Left lung (tissue), 14 donors: ENCODE measurements at regions of chr12 and their contacts with region 1.

Region 1: DNA sequence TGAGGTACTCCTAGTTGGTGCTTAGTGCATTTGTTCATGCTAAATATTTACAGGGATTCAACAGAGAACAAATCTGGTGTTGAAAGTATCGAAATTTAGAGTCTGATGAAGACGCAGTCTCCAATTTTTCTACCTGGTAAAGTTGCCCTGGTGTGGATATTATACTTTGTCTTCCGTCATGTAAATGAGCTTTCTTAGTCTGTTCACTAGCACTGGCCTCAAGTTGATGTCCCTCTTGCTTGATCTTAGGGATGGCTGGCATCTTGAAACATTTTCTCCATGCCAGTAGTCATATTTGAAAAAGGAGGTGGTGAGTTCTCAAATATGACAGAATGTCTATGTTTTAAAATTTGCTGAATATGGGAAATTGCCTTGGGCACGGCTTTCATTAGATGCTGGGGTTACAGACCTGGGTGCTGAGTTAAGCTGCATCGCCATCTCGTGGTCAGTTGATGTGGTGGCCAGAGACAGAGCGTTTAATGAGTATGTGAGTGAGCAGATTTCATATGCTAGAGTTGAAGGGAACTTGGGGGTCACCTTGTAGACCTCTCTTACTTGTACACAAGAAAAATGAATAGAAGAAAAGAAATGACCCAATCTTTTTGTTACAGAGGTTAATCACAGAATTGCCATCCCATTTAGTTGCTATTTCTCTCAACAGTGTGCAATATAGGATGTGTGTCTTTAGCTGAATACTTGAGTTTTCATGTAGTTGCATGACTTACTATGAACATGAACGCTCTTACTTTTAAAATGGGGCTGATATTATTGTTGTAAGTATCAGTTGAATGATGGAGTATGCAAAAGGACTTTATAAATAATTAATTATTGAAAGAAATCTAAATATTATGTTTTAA is 172.8 kb upstream of the DCN start:
- DNase-seq: peak in 3 of 4 donors; percentile 60 to 83 (median 82)
- ATAC-seq: peak; percentile 97
- H3K4me3 ChIP-seq: no peak overlapping the region
- H3K27ac ChIP-seq: no peak overlapping the region
- H3K4me1 ChIP-seq: peaks cover 0 to 3% of the 10 kb centered on the region in 2 donors
- H3K27me3 ChIP-seq: no peaks in the 10 kb centered on the region
- CTCF ChIP-seq: peak; percentile 60 to 84

Region 2: GRCh38 chr12:90978117-90978770 is 377.1 kb before region 1 on chr12:
- intact Hi-C with region 1: loop called in 1 of 2 experiments (anchors 10 kb)
- DNase-seq: peak in 1 of 4 donors; percentile 77
- ATAC-seq: peak; percentile 92
- H3K4me3 ChIP-seq: no peak overlapping the region
- H3K27ac ChIP-seq: peak overlapping the region in 1 of 2 donors; percentile 17
- H3K4me1 ChIP-seq: no peaks in the 10 kb centered on the region
- H3K27me3 ChIP-seq: no peaks in the 10 kb centered on the region
- CTCF ChIP-seq: peak in 1 of 2 donors; percentile 47